ENCODE measurements at regions of chr6 and their contacts with region 1.

Region 1: DNA sequence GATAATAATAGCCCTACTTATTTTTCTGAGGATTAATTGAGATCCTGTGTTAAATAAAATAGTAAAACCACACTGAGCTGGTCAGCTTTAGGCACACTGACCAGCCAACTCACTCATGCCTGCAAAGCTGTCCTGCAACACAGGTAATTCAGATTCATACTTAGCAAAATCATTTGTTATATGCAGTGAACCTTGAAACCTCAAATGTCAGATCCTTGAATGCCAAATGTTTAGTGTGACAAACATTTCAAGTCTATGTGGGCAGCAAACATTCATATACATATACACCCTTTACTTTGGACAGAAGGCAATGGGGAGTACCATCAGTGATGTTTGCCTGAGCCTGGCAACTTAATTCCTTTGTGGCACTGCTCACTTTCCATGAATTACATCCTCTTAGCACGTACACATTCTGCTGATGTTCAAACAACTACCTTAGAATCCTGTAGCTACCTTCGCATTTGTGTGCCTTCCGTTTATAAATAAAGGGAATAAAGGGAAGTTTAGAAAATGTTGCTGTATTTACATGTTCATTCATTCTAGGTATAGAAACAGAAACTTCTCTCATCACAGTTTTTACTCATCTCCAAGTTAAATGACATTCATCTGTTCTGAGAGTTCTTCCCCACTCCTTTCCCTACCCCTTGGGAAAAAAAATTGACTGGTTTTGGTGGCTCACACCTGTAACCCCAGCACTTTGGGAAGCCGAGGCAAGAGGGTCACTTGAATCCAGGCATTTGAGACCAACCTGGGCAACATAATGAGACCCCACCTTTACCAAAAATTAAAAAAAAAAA is 140.8 kb downstream of the ZFAND3 start:
- DNase-seq: no peak
- ATAC-seq: no peak
- H3K4me3 ChIP-seq: no peak overlapping the region
- H3K27ac ChIP-seq: no peak overlapping the region
- H3K4me1 ChIP-seq: no peaks in the 10 kb centered on the region
- H3K27me3 ChIP-seq: no peaks in the 10 kb centered on the region
- CTCF ChIP-seq: no peak
- POLR2A ChIP-seq: no peak
- RAD21 ChIP-seq: no peak

Region 2: GRCh38 chr6:37897321-37897720 is 63.0 kb before region 1 on chr6:
- CTCF ChIA-PET with region 1: no interaction called
- POLR2A ChIA-PET with region 1: interaction called, 11 read pairs
- dilution Hi-C with region 1: no loop called
- in situ Hi-C with region 1: no loop called
- intact Hi-C with region 1: no loop called
- DNase-seq: peak; percentile 60
- ATAC-seq: no peak
- H3K4me3 ChIP-seq: no peak overlapping the region
- H3K27ac ChIP-seq: no peak overlapping the region
- H3K4me1 ChIP-seq: no peaks in the 10 kb centered on the region
- H3K27me3 ChIP-seq: no peaks in the 10 kb centered on the region
- CTCF ChIP-seq: no peak
- POLR2A ChIP-seq: no peak
- RAD21 ChIP-seq: no peak